Astrocyte of the cerebellum (primary cell): ENCODE measurements at regions of chr5 and their contacts with region 1.

Region 1: DNA sequence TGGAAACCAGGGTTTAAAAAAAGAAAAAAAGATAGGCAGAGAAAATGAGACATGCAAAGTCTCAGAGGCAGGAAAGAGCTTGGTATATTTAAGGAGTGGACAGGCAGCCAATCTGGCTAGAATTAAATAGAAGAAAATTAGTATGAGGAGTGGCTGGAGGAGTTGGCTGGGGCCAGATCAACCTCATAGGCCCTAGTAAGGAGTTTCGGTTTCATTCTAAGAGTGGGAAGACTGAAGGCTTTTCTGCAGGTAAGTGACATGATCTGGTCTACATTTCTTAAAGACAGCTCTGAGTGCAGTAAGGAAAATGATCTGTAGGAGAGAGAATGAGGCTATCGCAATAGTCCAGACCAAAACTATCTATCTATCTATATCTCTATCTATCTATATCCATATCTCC is 27.5 kb downstream of the ADRB2 start:
- DNase-seq: no peak
- H3K4me3 ChIP-seq: no peak overlapping the region
- CTCF ChIP-seq: no peak

Region 2: GRCh38 chr5:148482691-148483462 is 371.0 kb before region 1 on chr5:
- in situ Hi-C with region 1: no loop called
- DNase-seq: no peak
- H3K4me3 ChIP-seq: no peak overlapping the region
- CTCF ChIP-seq: peak; percentile 51

Region 3: DNA sequence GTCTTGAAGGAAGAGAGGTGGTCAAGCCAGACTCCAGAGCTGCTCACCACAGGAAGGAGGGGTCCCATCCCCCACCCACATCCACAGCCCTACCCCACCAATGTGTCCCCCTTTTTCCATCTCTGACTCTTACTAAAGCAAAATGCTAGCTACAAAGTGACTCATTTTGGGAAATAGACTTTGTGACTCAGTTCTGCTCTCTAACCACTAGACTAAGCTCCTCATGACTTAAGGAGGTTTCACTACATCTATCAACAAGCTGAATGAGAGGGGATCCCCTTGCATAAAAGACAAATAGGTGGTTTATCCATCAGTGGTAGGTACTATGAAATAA is 62.6 kb before region 1 on chr5:
- in situ Hi-C with region 1: loop called (anchors 5 kb)
- DNase-seq: no peak
- H3K4me3 ChIP-seq: no peak overlapping the region
- CTCF ChIP-seq: no peak

Region 4: GRCh38 chr5:148912714-148913398 is 59.0 kb after region 1 on chr5:
- in situ Hi-C with region 1: loop called (anchors 5 kb)
- DNase-seq: peak; percentile 85
- H3K4me3 ChIP-seq: no peak overlapping the region
- CTCF ChIP-seq: peak; percentile 46